PC-9 (cell line): ENCODE measurements at regions of chr7 and their contacts with region 1.

Region 1: GRCh38 chr7:46129831-46130230 is 208.8 kb upstream of the IGFBP3 start:
- DNase-seq: no peak
- H3K4me3 ChIP-seq: no peak overlapping the region
- H3K27ac ChIP-seq: no peak overlapping the region
- H3K4me1 ChIP-seq: peaks cover 30% of the 10 kb centered on the region
- H3K27me3 ChIP-seq: no peaks in the 10 kb centered on the region
- CTCF ChIP-seq: no peak

Region 2: GRCh38 chr7:46032984-46033383 is 96.8 kb before region 1 on chr7:
- CTCF ChIA-PET with region 1: no interaction called
- POLR2A ChIA-PET with region 1: no interaction called
- intact Hi-C with region 1: loop called (anchors 1 kb)
- DNase-seq: peak; percentile 54 to 99
- H3K4me3 ChIP-seq: no peak overlapping the region; the same call in 1 of the 2 replicates
- H3K27ac ChIP-seq: peak overlapping the region; percentile 92
- H3K4me1 ChIP-seq: peaks cover 58% of the 10 kb centered on the region
- H3K27me3 ChIP-seq: no peaks in the 10 kb centered on the region
- CTCF ChIP-seq: no peak

Region 3: GRCh38 chr7:46115410-46115809 is 14.4 kb before region 1 on chr7:
- CTCF ChIA-PET with region 1: no interaction called
- POLR2A ChIA-PET with region 1: interaction called, 10 read pairs
- intact Hi-C with region 1: no loop called
- DNase-seq: no peak
- H3K4me3 ChIP-seq: no peak overlapping the region
- H3K27ac ChIP-seq: no peak overlapping the region
- H3K4me1 ChIP-seq: no peaks in the 10 kb centered on the region
- H3K27me3 ChIP-seq: no peaks in the 10 kb centered on the region
- CTCF ChIP-seq: no peak

Region 4: DNA sequence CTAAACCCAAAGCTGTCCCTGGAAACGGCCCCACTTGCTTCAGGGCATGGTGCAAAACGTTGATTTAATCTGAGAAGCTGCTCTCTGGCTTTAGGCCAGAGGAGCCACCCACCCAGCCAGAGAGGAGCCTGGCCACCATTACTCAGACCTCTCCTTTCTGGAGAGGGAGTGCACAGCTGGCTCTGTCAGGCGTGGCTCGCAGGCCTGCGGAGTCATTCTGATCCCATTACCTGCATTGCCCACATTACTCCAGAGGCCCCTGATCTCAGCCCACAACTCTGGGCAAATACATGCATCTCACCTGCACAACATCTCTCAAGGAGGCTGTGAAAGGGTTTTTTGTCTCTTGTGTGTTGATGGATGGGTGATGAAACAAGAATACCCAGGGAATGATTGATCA is 161.2 kb after region 1 on chr7:
- CTCF ChIA-PET with region 1: no interaction called
- POLR2A ChIA-PET with region 1: interaction called, 10 read pairs
- intact Hi-C with region 1: no loop called
- DNase-seq: peak; percentile 72 to 83
- H3K4me3 ChIP-seq: no peak overlapping the region
- H3K27ac ChIP-seq: peak overlapping the region; percentile 77
- H3K4me1 ChIP-seq: peaks cover 30% of the 10 kb centered on the region
- H3K27me3 ChIP-seq: no peaks in the 10 kb centered on the region
- CTCF ChIP-seq: no peak